ENCODE measurements at regions of chr22 and their contacts with region 1.

Region 1: DNA sequence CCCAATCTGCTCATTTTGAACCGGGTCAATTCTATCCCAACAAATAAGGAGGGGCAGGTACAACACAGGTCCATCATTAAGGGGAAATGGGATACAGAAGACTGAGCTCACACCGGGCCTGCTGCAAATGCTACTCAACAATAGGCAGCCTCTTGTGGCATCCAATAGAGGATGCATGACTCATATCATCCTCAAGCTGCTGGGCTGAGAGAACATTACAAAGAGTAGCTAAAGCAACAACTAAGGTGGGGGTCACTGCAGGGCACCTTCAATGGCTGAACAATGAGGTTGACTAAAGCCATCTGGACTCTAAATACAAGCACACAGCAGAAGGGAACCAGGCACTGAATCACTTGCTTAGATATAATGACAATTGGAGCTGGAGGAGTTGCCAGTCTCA is 130.1 kb upstream of the SYN3 start:
- DNase-seq: peak; percentile 11
- H3K4me3 ChIP-seq: no peak overlapping the region
- H3K27ac ChIP-seq: no peak overlapping the region
- H3K4me1 ChIP-seq: no peaks in the 10 kb centered on the region
- H3K27me3 ChIP-seq: peaks cover 2% of the 10 kb centered on the region
- CTCF ChIP-seq: no peak

Region 2: GRCh38 chr22:33167998-33168790 is 20.1 kb before region 1 on chr22:
- CTCF ChIA-PET with region 1: no interaction called
- dilution Hi-C with region 1: no loop called
- in situ Hi-C with region 1: no loop called
- intact Hi-C with region 1: loop called (anchors 2 kb)
- DNase-seq: no peak
- H3K4me3 ChIP-seq: no peak overlapping the region
- H3K27ac ChIP-seq: no peak overlapping the region
- H3K4me1 ChIP-seq: no peaks in the 10 kb centered on the region
- H3K27me3 ChIP-seq: peaks cover 3% of the 10 kb centered on the region
- CTCF ChIP-seq: no peak